WTC11 (cell line): ENCODE measurements at regions of chr9 and their contacts with region 1.

Region 1: GRCh38 chr9:32703635-32704034 is 68.2 kb upstream of the TAF1L start:
- DNase-seq: peak; percentile 19
- ATAC-seq: peak; percentile 84
- H3K4me3 Mint-ChIP-seq: no peak overlapping the region
- H3K27ac Mint-ChIP-seq: no peak overlapping the region
- H3K4me1 Mint-ChIP-seq: peaks cover 5% of the 10 kb centered on the region
- H3K27me3 Mint-ChIP-seq: peaks cover 19% of the 10 kb centered on the region
- CTCF ChIP-seq: no peak

Region 2: DNA sequence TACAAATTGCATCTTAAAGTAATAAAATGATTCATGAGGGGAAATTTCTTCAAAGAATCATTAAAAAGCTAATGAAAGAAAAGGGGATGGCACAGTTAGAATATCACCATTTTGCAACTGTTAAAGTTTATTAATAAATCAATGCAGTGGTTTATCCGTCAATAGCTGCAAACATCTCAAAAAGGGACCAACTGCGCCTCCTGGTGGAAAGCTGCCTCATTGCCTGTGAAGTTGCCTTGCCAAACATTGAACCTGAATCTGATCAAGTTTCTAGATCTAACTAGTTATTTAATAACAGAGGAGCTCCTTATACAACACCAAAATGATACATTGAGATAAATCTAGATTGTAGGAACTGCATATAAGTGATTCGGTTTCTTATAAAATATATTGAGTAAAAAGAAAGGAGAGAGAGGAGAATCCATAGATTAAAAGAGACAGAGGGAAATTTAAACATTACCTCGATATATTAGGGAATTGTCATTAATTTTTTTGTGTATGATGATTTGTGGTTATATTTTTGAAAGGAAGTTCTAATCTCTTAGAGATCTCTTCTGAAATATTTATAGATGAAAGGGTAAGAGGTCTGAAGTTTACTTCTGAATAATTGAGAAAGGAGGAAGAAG is 123.8 kb before region 1 on chr9:
- CTCF ChIA-PET with region 1: interaction called, 17 read pairs
- POLR2A ChIA-PET with region 1: no interaction called
- DNase-seq: peak; percentile 76
- ATAC-seq: no peak
- H3K4me3 Mint-ChIP-seq: no peak overlapping the region
- H3K27ac Mint-ChIP-seq: no peak overlapping the region
- H3K4me1 Mint-ChIP-seq: peaks cover 11% of the 10 kb centered on the region
- H3K27me3 Mint-ChIP-seq: no peaks in the 10 kb centered on the region
- CTCF ChIP-seq: peak; percentile 85

Region 3: GRCh38 chr9:32589083-32589723 is 114.4 kb before region 1 on chr9:
- CTCF ChIA-PET with region 1: interaction called, 13 read pairs
- POLR2A ChIA-PET with region 1: no interaction called
- DNase-seq: no peak
- ATAC-seq: peak; percentile 71
- H3K4me3 Mint-ChIP-seq: no peak overlapping the region
- H3K27ac Mint-ChIP-seq: no peak overlapping the region
- H3K4me1 Mint-ChIP-seq: no peaks in the 10 kb centered on the region
- H3K27me3 Mint-ChIP-seq: peaks cover 4% of the 10 kb centered on the region; the same call in 1 of the 2 replicates
- CTCF ChIP-seq: no peak